Activated naive CD4-positive, alpha-beta T cell treated with anti-CD3 and anti-CD28 coated beads, Interleukin-2, amount 10 ng/mL, durations not matched to agents 7 days and 5 days (primary cell): ENCODE measurements at regions of chr20 and their contacts with region 1.

Region 1: DNA sequence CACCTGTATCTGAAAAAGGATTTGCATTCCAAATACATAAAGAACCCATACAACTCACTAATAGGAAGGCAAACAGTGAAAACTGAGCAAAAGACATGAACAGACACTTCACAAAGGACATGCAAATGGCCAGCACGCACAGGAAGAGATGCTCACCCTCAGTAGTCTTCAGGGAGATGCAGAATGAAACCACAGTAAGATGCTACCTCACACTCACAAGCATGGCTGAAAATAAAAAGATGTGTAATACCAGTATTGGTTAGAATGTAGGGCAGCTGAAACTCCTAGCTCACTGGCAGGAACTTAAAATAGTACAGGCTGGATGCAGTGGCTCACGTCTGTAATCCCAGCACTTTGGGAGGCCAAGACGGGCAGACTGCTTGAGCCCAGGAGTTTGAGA is 64.6 kb downstream of the SNX5 start:
- DNase-seq: no peak
- H3K4me3 Mint-ChIP-seq: no peak overlapping the region
- H3K27ac Mint-ChIP-seq: no peak overlapping the region
- H3K4me1 Mint-ChIP-seq: peaks cover 4% of the 10 kb centered on the region
- H3K27me3 Mint-ChIP-seq: peaks cover 29% of the 10 kb centered on the region

Region 2: GRCh38 chr20:17849901-17850683 is 53.9 kb before region 1 on chr20:
- CTCF ChIA-PET with region 1: no interaction called
- DNase-seq: no peak
- H3K4me3 Mint-ChIP-seq: no peak overlapping the region
- H3K27ac Mint-ChIP-seq: no peak overlapping the region
- H3K4me1 Mint-ChIP-seq: peaks cover 26% of the 10 kb centered on the region
- H3K27me3 Mint-ChIP-seq: peaks cover 20% of the 10 kb centered on the region

Region 3: DNA sequence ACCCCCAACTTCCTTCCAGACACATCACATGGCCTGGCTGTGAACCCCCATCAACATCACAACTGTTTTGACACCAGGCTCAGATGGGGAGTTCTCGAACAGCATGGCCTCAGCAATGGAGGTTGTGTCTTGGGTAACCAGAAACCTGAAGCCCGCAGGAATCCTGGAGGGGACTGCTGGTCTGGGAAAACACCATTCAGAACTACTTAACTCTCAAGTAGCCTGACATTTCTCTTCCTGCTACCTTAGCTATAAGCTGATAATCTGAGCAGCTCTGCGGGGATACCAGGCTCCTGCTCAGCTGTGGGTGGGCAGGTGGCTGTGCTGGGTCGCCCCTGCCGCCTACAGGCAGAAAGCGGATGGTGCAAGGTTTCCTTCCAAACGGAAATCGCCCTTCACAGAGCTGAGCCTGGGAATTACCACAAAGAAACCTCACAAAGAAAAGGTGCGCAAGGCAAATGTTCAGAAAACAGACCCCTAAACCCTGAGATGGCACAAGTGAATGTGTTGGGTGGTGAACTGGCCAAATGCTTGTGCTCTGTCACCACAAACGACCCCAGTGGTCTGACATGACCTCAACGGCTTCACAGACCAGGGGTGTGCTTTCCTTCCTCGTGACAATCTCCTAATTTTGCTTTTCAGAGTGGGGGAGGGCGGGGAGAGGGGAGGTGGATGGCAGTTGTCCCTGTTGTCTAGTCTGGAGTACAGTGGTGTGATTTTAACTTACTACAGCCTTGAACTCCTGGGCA is 35.0 kb after region 1 on chr20:
- CTCF ChIA-PET with region 1: interaction called, 13 read pairs
- DNase-seq: peak; percentile 69
- H3K4me3 Mint-ChIP-seq: no peak overlapping the region
- H3K27ac Mint-ChIP-seq: peak overlapping the region; percentile 64
- H3K4me1 Mint-ChIP-seq: peaks cover 20% of the 10 kb centered on the region
- H3K27me3 Mint-ChIP-seq: no peaks in the 10 kb centered on the region